SK-MEL-5 (cell line): ENCODE measurements at regions of chr2 and their contacts with region 1.

Region 1: DNA sequence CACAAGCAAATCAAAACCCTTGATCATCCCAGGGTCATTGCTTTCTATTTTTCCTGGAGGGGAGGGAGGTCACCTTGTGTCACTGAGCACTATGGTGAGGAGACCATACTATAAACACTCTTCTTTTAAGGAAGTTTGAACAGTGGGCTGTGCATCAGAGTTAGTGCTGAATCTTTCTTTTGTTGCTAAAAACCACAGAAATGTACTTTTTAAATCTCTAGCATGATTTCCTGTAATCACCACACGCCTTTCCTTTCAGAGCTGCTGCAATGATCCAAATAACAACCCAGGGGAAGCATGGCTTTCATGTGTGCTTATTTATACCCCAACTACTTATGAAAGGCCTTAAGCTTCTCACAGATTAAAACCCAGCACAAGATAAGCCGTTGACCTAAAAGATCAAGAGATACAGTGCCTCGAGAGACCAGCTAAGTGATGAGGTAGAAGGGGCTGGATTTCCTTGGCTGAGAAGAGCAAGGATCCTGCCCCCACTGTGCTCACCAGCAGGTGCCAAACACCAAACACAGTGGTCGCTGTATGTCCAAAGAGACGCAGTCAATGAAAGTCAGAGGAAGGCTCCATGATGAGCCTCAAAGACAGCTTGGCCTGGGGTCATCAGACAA is 34.7 kb downstream of the TRABD2A start:
- DNase-seq: peak; percentile 49

Region 2: GRCh38 chr2:84781942-84782716 is 64.0 kb before region 1 on chr2:
- in situ Hi-C with region 1: loop called (anchors 10 kb)
- DNase-seq: no peak